Prostate gland (tissue), 2 donors: ENCODE measurements at regions of chr20 and their contacts with region 1.

Region 1: DNA sequence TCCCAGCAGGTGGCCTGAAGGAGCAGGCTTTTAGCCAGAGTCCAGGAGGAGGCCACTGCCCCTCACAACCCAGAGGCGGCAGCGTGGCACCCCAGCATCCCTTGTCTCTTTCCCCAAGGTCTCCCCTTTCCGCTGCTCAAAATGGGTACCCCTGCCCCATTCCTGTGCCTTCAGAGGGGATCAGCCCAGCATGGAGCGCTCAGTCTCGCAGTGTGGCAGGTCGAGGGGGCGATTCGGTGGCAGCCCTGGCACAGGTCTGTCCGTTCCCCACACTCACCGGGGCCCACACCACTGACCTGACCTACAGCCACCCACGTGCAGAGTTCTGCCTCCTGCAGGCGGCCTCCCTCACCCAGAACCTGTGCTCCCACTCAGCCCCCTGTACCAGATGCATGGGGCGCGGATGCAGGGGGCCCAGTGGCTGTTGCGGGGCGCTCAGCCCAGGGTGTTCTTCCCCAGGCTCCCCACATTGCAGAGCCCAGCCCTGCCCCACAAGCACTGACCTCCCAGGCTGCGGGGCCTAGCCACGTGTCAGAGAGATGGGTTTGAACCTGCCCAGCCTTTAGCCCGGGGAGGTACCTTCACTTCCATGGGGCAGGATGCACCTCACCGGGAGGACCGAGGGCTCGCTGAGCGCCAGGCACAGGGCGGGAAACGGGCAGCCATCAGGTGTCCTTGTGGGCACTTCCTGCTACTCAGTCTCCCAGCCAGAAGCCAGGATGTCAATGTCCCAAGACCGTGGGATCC is 41.8 kb downstream of the DSTN start:
- DNase-seq: no peak
- H3K4me3 ChIP-seq: no peak overlapping the region
- H3K27ac ChIP-seq: peak overlapping the region; percentile 43 to 44
- H3K4me1 ChIP-seq: peaks cover 8% of the 10 kb centered on the region
- H3K27me3 ChIP-seq: no peaks in the 10 kb centered on the region
- CTCF ChIP-seq: no peak
- POLR2A ChIP-seq: no peak

Region 2: GRCh38 chr20:17569616-17570346 is 41.9 kb before region 1 on chr20 and contains the start of gene DSTN:
- intact Hi-C with region 1: loop called (anchors 5 kb)
- DNase-seq: peak; percentile 93
- H3K4me3 ChIP-seq: peak within 1 kb of the TSS; percentile 91 to 100
- H3K27ac ChIP-seq: peak within 1 kb of the TSS; percentile 96 to 100
- H3K4me1 ChIP-seq: peaks cover 6% of the 10 kb centered on the region
- H3K27me3 ChIP-seq: no peaks in the 10 kb centered on the region
- CTCF ChIP-seq: peak in 1 of 4 experiments; percentile 22
- POLR2A ChIP-seq: peak; percentile 98
- total RNA-seq, gene DSTN: 284 to 559 TPM